Gastrocnemius medialis (tissue), 4 donors: ENCODE measurements at regions of chr19 and their contacts with region 1.

Region 1: DNA sequence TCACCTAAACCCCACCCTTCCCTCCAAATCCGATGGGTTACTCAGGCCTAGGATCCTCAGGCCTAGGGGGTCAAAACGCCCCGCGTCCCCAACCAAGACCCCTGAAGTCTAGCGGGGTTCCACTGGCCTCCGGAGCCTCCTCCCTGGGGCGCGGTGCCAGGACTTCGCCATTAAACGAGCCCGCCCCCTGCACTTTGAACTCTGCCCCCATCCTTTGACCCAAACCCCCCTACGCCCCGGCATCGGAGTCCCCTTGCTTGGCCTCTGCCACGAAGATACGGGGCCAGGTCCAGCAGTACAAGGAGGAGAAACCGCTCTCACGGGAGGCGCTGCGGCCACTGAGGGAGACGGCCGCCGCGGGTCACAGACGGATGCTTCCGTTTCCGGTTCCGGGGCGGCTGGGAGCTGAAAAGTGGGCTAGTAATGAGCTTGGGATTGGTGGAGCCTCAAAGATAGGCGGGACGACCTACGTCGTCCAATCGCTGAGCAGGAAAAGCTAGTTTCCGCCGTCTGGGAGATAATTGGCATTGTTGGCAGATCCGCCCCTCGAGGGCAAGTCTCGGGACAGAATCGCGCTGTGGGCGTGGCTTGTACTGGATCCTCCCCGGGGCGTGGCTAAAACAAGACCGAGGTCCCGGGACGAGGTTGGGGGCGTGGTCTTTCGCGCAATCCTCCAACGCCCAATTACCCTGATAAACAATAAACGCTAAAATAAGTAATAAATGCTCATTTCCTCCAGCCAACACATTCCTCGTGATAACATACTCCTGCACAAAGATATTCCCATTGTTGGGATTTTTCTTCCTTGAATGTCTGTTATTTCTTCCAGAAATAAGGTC is 5.7 kb upstream of the ZNF77 start:
- DNase-seq: peak; percentile 100
- ATAC-seq: peak; percentile 99 to 100
- H3K4me3 ChIP-seq: peak overlapping the region; percentile 63 to 88 (median 81)
- H3K27ac ChIP-seq: peak overlapping the region; percentile 88 to 97 (median 92)
- H3K4me1 ChIP-seq: peaks cover 14 to 18% of the 10 kb centered on the region in 2 donors
- H3K27me3 ChIP-seq: no peaks in the 10 kb centered on the region
- CTCF ChIP-seq: no peak
- POLR2A ChIP-seq: peak; percentile 85 to 90

Region 2: GRCh38 chr19:2867025-2867991 is 83.2 kb before region 1 on chr19 and contains the start of gene ZNF556:
- in situ Hi-C with region 1: no loop called
- intact Hi-C with region 1: no loop called
- DNase-seq: peak; percentile 55 to 84
- ATAC-seq: peak; percentile 98
- H3K4me3 ChIP-seq: peak within 1 kb of the TSS in 3 of 4 donors; percentile 50 to 56 (median 52)
- H3K27ac ChIP-seq: peak within 1 kb of the TSS in 3 of 4 donors; percentile 37 to 74 (median 74)
- H3K4me1 ChIP-seq: no peaks in the 10 kb centered on the region
- H3K27me3 ChIP-seq: no peaks in the 10 kb centered on the region
- CTCF ChIP-seq: peak in 1 of 5 experiments; percentile 12
- POLR2A ChIP-seq: peak; percentile 35 to 37
- total RNA-seq, gene ZNF556: 0.26 to 0.34 TPM in 2 of 4 donors, not detected in the others

Region 3: GRCh38 chr19:2900296-2901252 is 49.9 kb before region 1 on chr19 and contains the start of gene ZNF57:
- in situ Hi-C with region 1: no loop called
- intact Hi-C with region 1: loop called (anchors 2 kb)
- DNase-seq: peak; percentile 99
- ATAC-seq: peak; percentile 100
- H3K4me3 ChIP-seq: peak within 1 kb of the TSS; percentile 71 to 88 (median 84)
- H3K27ac ChIP-seq: peak within 1 kb of the TSS; percentile 71 to 82 (median 76)
- H3K4me1 ChIP-seq: peaks cover 8 to 10% of the 10 kb centered on the region in 2 donors
- H3K27me3 ChIP-seq: no peaks in the 10 kb centered on the region
- CTCF ChIP-seq: no peak
- POLR2A ChIP-seq: peak; percentile 42 to 52
- total RNA-seq, gene ZNF57: 0.44 to 2.1 (median 0.83) TPM

Region 4: GRCh38 chr19:3035542-3036118 is 85.1 kb after region 1 on chr19:
- in situ Hi-C with region 1: no loop called
- intact Hi-C with region 1: loop called (anchors 2 kb)
- DNase-seq: peak; percentile 99
- ATAC-seq: peak; percentile 92 to 93
- H3K4me3 ChIP-seq: peak overlapping the region; percentile 51 to 90 (median 81)
- H3K27ac ChIP-seq: peak overlapping the region; percentile 88 to 100 (median 98)
- H3K4me1 ChIP-seq: peaks cover 19 to 20% of the 10 kb centered on the region in 2 donors
- H3K27me3 ChIP-seq: no peaks in the 10 kb centered on the region
- CTCF ChIP-seq: peak in 1 of 5 experiments; percentile 14
- POLR2A ChIP-seq: peak in 1 of 2 donors; percentile 48

Region 5: DNA sequence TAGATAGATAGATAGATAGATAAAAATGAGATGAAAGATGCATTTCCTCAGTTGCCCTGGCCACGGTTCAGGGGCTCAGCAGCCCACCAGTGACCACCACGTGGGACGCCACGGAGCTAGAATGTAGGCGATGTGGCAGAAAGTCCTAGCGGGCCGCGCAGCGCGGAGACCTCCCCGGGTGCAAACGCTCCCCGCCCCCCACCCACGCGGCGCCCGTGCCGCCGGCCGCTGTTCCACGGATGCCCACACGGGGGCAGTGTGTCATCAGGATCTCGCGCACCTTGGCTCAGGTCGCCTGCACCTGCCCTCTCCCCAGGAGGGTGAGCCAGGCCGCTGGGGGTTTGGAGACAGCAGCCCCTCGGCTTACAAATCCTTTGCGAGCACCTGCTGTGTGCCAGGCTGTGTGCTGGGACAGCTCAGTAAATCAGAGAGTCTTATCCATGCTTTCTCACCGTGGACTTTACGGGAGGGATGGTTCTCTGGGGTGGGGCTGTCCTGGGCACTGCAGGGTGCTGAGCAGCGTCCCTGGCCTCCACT is 125.5 kb after region 1 on chr19:
- in situ Hi-C with region 1: loop called in 2 of 4 experiments (anchors 25 kb)
- intact Hi-C with region 1: no loop called
- DNase-seq: no peak
- ATAC-seq: peak; percentile 55 to 61
- H3K4me3 ChIP-seq: peak overlapping the region in 2 of 4 donors; percentile 13 to 26
- H3K27ac ChIP-seq: peak overlapping the region in 2 of 4 donors; percentile 3 to 70
- H3K4me1 ChIP-seq: peaks cover 9 to 11% of the 10 kb centered on the region in 2 donors
- H3K27me3 ChIP-seq: no peaks in the 10 kb centered on the region
- CTCF ChIP-seq: peak; percentile 76 to 98 (median 96)
- POLR2A ChIP-seq: no peak

Region 6: GRCh38 chr19:3108775-3109174 is 158.3 kb after region 1 on chr19:
- in situ Hi-C with region 1: loop called in 1 of 4 experiments (anchors 10 kb)
- intact Hi-C with region 1: no loop called
- DNase-seq: peak in 1 of 2 donors; percentile 48
- ATAC-seq: peak in 1 of 2 donors; percentile 68
- H3K4me3 ChIP-seq: no peak overlapping the region
- H3K27ac ChIP-seq: no peak overlapping the region
- H3K4me1 ChIP-seq: peaks cover 7 to 39% of the 10 kb centered on the region in 2 donors
- H3K27me3 ChIP-seq: no peaks in the 10 kb centered on the region
- CTCF ChIP-seq: peak; percentile 52 to 84 (median 78)
- POLR2A ChIP-seq: no peak

Region 7: GRCh38 chr19:3505598-3506383 is 555.3 kb after region 1 on chr19 and contains the start of gene FZR1:
- in situ Hi-C with region 1: no loop called
- intact Hi-C with region 1: loop called (anchors 10 kb)
- DNase-seq: peak; percentile 96 to 98
- ATAC-seq: peak; percentile 92 to 95
- H3K4me3 ChIP-seq: peak within 1 kb of the TSS; percentile 56 to 100 (median 82)
- H3K27ac ChIP-seq: peak within 1 kb of the TSS; percentile 80 to 90 (median 84)
- H3K4me1 ChIP-seq: peaks cover 15 to 35% of the 10 kb centered on the region in 2 donors
- H3K27me3 ChIP-seq: no peaks in the 10 kb centered on the region
- CTCF ChIP-seq: no peak
- POLR2A ChIP-seq: peak; percentile 88
- total RNA-seq, gene FZR1: 15.9 to 32.0 (median 21.0) TPM